ENCODE measurements at regions of chr14 and their contacts with region 1.

Region 1: GRCh38 chr14:95561001-95561412 is 26.2 kb downstream of the GLRX5 start:
- DNase-seq: peak; percentile 81
- H3K27ac ChIP-seq: no peak overlapping the region
- CTCF ChIP-seq: peak; percentile 96

Region 2: DNA sequence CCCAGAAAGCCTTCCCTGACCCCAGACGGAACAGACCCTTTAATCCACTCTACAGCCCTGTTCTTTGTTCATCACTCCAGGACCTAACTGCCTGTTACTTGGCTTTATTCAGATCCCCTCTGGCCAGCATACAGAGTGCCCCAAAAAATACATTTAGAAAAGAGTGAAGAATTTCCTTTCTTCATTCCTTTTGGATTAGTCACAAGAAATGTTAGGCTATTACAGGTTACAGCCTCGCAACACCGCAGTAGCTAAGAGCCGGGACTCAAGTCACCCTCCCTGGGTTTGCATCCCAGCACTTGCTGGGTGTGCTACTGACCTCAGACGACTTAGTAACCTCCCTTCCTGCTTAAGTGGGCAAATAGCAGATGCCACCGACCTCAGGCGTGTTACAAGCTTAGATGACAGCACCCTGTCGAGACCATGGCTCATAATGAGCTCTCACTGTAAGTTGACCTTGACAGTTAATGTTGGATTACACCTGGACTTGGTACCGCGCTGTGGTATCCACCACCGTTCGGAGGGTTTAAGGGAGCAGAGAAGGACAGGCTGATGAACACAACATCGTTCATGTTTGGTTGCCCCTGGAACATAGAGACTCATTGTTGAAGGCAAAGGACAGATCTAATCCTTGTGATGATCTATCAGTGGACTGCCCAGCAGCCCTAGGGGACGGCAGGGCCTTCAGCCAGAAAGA is 13.2 kb before region 1 on chr14:
- CTCF ChIA-PET with region 1: interaction called, 3 read pairs
- POLR2A ChIA-PET with region 1: interaction called, 14 read pairs
- DNase-seq: peak; percentile 60
- H3K27ac ChIP-seq: peak overlapping the region; percentile 66
- CTCF ChIP-seq: no peak

Region 3: DNA sequence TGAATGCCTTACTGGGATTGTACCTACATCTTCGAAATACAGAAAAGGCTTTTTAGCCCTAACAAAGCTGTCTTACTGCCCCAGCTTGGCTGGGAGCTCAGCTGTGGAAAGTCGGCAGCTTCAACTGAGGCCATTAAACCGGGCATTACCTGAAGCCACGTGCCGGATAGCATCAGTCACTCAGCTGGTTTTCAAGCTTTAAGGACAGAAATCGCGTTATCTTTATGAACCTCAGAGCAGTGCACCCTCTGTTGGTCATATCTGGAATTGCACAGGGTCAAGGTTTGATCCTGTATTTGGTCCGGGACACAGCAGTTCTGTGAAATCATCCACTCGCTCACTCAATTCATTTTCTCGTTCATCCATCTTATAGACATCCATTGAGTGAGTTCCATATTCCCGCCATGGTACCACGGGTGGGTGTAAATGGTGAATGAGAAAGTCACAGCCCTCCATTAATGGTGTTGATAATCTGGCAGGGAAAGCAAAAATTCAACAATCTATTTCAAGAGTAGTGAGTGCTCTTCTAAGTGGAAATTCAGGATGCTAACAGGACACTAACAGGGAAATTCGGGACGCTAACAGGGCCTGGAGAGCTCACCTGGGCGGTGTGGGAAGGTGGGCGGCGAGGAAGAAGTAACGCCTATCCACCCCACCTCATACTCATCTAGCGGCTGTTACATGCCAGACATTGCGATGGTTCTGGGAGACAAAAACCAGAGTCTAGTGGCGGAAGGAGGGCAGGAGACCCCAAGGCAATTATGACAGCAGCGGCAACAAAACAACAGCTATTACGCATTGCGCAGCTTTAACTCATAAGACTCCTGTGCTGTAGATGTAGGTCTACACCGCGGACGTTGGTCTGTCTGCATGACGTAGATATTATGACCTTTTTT is 213.5 kb after region 1 on chr14:
- CTCF ChIA-PET with region 1: interaction called, 11 read pairs
- POLR2A ChIA-PET with region 1: no interaction called
- DNase-seq: peak; percentile 42
- H3K27ac ChIP-seq: no peak overlapping the region
- CTCF ChIP-seq: peak; percentile 82

Region 4: GRCh38 chr14:95993768-95994592 is 433.0 kb after region 1 on chr14:
- CTCF ChIA-PET with region 1: interaction called, 25 read pairs
- POLR2A ChIA-PET with region 1: no interaction called
- DNase-seq: peak; percentile 66
- H3K27ac ChIP-seq: no peak overlapping the region
- CTCF ChIP-seq: peak; percentile 77